Naive thymus-derived CD4-positive, alpha-beta T cell (primary cell): ENCODE measurements at regions of chr12 and their contacts with region 1.

Region 1: DNA sequence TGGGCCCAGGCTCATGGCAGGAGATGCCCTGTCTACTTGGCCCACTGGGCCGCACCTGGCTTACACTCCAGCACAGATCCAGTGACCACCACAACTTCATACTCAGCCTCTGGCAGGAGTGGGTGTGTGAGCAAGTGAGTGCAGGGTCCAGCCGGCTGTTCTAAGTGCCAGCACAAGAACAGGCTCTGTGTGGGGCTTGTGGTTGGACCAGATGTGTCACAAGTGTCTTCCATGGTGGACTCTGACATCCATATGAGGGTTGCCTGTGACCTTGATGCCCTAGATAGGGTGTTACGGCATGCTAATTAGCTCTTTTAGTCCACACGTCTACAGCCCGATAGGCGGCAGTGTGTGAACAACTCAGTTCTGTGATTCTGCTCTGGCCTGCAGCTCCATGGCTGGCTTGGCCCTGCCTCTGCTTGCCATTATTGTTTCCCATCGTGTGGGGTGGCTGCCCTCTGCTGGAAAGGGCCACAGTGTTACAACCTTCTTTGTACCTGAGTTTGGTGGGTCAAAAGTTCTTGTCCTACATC is 1089.1 kb downstream of the SLC6A15 start:
- DNase-seq: peak in 2 of 9 donors; percentile 2
- ATAC-seq: peak; percentile 70
- H3K4me3 ChIP-seq: no peak overlapping the region
- H3K4me3 Mint-ChIP-seq: no peak overlapping the region
- H3K27ac ChIP-seq: no peak overlapping the region
- H3K27ac Mint-ChIP-seq: no peak overlapping the region
- H3K4me1 ChIP-seq: no peaks in the 10 kb centered on the region
- H3K4me1 Mint-ChIP-seq: no peaks in the 10 kb centered on the region
- H3K27me3 ChIP-seq: no peaks in the 10 kb centered on the region
- H3K27me3 Mint-ChIP-seq: peaks cover 0 to 4% (median 0%) of the 10 kb centered on the region in 5 donors

Region 2: GRCh38 chr12:82527165-82527780 is 1296.2 kb before region 1 on chr12:
- CTCF ChIA-PET with region 1: no interaction called
- POLR2A ChIA-PET with region 1: no interaction called
- intact Hi-C with region 1: loop called (anchors 1 to 2 kb)
- DNase-seq: peak in 2 of 9 donors; percentile 13 to 27
- ATAC-seq: peak; percentile 60
- H3K4me3 ChIP-seq: no peak overlapping the region
- H3K4me3 Mint-ChIP-seq: no peak overlapping the region
- H3K27ac ChIP-seq: no peak overlapping the region
- H3K27ac Mint-ChIP-seq: no peak overlapping the region
- H3K4me1 ChIP-seq: no peaks in the 10 kb centered on the region
- H3K4me1 Mint-ChIP-seq: no peaks in the 10 kb centered on the region
- H3K27me3 ChIP-seq: no peaks in the 10 kb centered on the region
- H3K27me3 Mint-ChIP-seq: peaks cover 0 to 6% (median 4%) of the 10 kb centered on the region in 5 donors

Region 3: GRCh38 chr12:83005534-83006197 is 817.8 kb before region 1 on chr12:
- CTCF ChIA-PET with region 1: no interaction called
- POLR2A ChIA-PET with region 1: no interaction called
- intact Hi-C with region 1: loop called in 1 of 2 experiments (anchors 10 kb)
- DNase-seq: no peak
- ATAC-seq: no peak
- H3K4me3 ChIP-seq: no peak overlapping the region
- H3K4me3 Mint-ChIP-seq: no peak overlapping the region
- H3K27ac ChIP-seq: no peak overlapping the region
- H3K27ac Mint-ChIP-seq: no peak overlapping the region
- H3K4me1 ChIP-seq: no peaks in the 10 kb centered on the region
- H3K4me1 Mint-ChIP-seq: no peaks in the 10 kb centered on the region
- H3K27me3 ChIP-seq: no peaks in the 10 kb centered on the region
- H3K27me3 Mint-ChIP-seq: no peaks in the 10 kb centered on the region